Activated naive CD4-positive, alpha-beta T cell treated with anti-CD3 and anti-CD28 coated beads, Interleukin-2, amount 10 ng/mL, durations not matched to agents 7 days and 5 days (primary cell): ENCODE measurements at regions of chr11 and their contacts with region 1.

Region 1: GRCh38 chr11:47541070-47541469 is 11.9 kb downstream of the CELF1 start:
- DNase-seq: no peak
- H3K4me3 Mint-ChIP-seq: no peak overlapping the region
- H3K27ac Mint-ChIP-seq: no peak overlapping the region
- H3K4me1 Mint-ChIP-seq: peaks cover 44% of the 10 kb centered on the region
- H3K27me3 Mint-ChIP-seq: no peaks in the 10 kb centered on the region

Region 2: DNA sequence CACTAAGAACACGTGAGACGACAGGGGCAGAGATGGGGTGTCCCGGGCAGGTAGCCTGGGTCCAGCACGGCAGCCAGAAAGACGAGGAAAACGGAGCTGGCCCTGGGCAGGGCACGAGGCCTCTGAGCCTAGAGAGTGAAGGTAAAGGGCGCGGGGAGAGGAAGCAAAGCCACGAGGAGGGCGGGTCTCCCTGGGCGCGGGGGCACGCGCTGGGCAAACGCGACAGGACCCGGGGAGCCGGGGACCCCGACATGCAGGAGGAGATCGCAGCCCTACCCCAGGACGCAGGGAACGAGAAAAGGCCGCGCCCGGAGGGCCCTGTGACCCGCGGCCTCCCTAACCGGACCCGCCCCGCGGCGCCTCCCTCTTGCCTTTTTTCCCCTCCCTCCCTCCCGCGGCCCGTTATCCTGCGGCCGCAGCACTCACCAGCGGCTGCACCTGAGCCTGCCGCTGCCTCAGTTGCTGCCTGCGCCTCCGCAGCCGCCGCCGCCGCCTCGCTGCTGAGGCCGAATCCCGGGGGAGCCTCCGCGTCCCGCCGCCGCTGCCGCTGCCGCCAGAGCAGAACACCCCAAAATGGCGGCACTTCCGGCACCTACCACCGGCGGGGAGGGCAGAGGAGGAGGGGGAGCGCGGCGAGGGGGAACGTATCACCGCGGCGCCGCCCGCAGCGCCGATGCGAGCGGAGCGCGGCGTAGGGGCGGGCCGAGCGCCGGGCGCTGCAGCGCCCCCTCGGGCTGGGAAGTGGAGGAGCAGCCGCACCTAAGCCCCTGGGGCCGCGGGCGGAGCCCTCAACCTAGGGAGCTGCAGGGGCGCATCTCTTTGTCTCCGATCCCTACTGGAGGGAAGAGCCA is 11.7 kb after region 1 on chr11 and contains the start of gene CELF1:
- CTCF ChIA-PET with region 1: interaction called, 13 read pairs
- DNase-seq: peak; percentile 95
- H3K4me3 Mint-ChIP-seq: peak within 1 kb of the TSS; percentile 99
- H3K27ac Mint-ChIP-seq: peak within 1 kb of the TSS; percentile 95
- H3K4me1 Mint-ChIP-seq: peaks cover 48% of the 10 kb centered on the region
- H3K27me3 Mint-ChIP-seq: peaks cover 4% of the 10 kb centered on the region